CD8-positive, alpha-beta T cell (primary cell): ENCODE measurements at regions of chr1 and their contacts with region 1.

Region 1: DNA sequence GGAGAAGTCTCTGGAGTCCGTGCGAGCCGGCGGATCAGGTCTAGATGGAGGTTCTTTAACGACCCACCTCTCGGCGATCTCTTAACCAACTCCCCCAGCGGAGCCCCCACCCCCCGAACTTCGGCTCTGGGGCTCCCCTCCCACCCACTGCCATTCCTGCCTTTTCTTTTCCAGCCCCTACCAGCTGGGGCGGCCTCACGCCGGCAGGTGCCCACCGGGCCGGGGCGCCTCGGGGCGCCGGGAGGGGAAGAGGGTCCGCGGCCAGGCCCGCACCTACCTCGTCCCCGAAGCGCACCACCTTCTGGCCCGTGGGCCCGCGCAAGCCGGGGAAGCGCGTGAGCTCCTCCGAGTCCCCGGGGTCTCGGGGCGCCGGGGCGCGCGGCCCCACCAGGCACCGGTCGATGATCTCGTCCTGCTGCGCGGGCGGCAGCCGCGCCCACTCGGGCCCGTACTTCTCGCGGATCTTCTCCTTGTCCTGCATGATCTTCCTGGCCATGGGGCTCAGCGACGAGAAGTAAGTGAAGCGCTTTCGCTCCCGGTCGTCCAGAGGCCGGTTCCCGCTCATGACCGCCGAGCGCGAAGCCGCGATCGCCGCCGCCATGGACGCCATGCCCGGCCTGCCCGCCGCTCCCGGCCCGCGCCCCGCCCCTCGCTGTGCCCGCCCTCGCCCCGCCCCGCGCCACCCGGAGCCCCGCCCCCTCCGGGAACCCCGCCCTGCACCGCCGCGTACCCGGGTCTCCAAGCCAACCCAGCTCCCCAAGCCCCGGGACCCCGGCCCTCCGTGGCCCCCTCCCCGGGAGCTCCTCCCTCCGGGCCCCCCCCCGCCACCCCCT is at the start of gene C1orf198:
- DNase-seq: peak; percentile 53 to 88 (median 72)
- ATAC-seq: peak; percentile 93
- H3K4me3 ChIP-seq: peak within 1 kb of the TSS; percentile 65 to 79
- H3K4me3 Mint-ChIP-seq: peak within 1 kb of the TSS; percentile 89
- H3K27ac ChIP-seq: peak within 1 kb of the TSS in 1 of 2 experiments; percentile 57
- H3K27ac Mint-ChIP-seq: peak within 1 kb of the TSS; percentile 49
- H3K4me1 ChIP-seq: peaks cover 14% of the 10 kb centered on the region
- H3K4me1 Mint-ChIP-seq: peaks cover 21% of the 10 kb centered on the region
- H3K27me3 ChIP-seq: no peaks in the 10 kb centered on the region
- H3K27me3 Mint-ChIP-seq: peaks cover 18% of the 10 kb centered on the region
- CTCF ChIP-seq: no peak
- total RNA-seq, gene C1orf198: 3.2 to 3.8 TPM

Region 2: DNA sequence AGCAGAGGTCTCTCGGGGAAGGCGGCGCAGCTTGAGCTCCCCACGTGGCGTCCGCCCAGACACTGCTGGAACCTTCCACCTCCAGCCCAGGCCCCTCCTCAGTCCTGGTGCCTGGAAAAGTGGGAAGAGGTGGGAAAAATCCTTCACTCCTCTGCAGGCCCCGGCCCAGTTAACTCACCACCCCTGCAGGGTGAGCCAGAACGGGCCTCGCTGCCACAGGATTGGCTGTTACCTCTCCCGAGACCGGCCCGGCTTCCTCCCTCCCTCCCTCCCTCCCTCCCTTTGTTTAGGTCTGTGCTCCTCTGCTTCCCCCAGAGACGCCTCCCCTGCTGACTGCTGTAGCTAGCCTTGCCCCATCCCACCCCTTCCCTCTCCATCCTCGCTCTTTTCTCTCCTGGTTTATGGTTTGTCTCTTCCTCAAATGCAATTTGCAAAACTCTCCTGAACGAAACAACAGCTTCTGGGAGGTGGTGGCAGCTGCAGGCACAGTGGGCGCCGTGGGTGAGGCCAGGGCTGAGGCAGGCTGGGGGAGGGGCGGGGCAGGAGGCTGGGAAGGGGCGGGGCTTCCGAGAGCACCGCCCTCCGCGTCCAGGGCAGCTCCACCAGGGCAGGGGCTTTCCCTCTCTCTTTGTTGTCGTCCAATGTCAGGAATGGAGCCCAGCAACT is 114.4 kb before region 1 on chr1:
- CTCF ChIA-PET with region 1: no interaction called
- POLR2A ChIA-PET with region 1: no interaction called
- intact Hi-C with region 1: loop called in 1 of 2 experiments (anchors 2 kb)
- DNase-seq: peak in 3 of 9 experiments; percentile 34 to 61 (median 40)
- ATAC-seq: peak; percentile 75
- H3K4me3 ChIP-seq: peak overlapping the region in 1 of 2 experiments; percentile 39
- H3K4me3 Mint-ChIP-seq: peak overlapping the region; percentile 72
- H3K27ac ChIP-seq: no peak overlapping the region
- H3K27ac Mint-ChIP-seq: peak overlapping the region; percentile 71
- H3K4me1 ChIP-seq: no peaks in the 10 kb centered on the region
- H3K4me1 Mint-ChIP-seq: peaks cover 10% of the 10 kb centered on the region
- H3K27me3 ChIP-seq: no peaks in the 10 kb centered on the region
- H3K27me3 Mint-ChIP-seq: peaks cover 3% of the 10 kb centered on the region
- CTCF ChIP-seq: no peak

Region 3: DNA sequence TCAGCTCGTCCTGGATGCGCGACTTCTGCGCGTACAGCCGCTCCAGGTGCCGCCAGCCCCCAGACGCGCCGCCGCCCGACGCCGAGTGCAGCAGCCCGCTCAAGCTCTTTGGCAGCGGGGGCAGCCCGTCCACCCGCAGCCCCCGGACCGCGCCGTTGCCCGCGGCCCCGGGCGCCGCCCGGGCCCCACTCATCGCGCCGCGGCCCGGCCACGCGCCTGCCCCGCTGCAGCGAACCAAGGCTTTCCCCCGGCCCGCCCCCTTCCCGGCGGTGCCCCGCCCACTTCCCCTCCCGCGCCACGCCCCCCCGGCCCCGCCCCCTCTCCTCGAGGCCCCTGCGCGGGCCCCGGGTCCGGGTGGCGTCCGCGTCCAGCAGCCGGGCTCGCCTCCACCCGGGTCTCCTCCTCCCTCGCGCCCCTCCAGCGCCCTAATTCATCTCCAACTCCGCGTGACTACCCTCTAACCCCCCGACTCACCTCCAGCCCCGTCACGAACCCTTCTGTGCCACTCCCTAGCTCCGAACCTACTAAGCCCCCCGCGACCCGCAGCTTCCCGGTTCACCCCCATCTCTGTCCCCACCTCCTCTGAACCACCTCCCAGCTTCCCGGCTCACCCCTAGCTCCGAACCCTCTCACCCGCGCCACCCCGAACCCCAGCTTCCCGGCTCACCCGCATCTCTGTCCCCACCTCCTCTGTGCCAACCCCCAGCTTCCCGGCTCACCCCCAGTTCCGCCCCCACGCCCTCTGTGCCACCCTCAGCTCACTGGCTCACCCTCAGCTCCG is 172.1 kb after region 1 on chr1 and contains the start of gene FAM89A:
- CTCF ChIA-PET with region 1: no interaction called
- POLR2A ChIA-PET with region 1: no interaction called
- intact Hi-C with region 1: loop called (anchors 1 to 2 kb)
- DNase-seq: peak; percentile 44 to 86 (median 71)
- ATAC-seq: peak; percentile 72
- H3K4me3 ChIP-seq: peak within 1 kb of the TSS; percentile 81 to 83
- H3K4me3 Mint-ChIP-seq: peak within 1 kb of the TSS; percentile 83
- H3K27ac ChIP-seq: no peak within 1 kb of the TSS
- H3K27ac Mint-ChIP-seq: peak within 1 kb of the TSS; percentile 27
- H3K4me1 ChIP-seq: peaks cover 22% of the 10 kb centered on the region
- H3K4me1 Mint-ChIP-seq: peaks cover 33% of the 10 kb centered on the region
- H3K27me3 ChIP-seq: no peaks in the 10 kb centered on the region
- H3K27me3 Mint-ChIP-seq: no peaks in the 10 kb centered on the region
- CTCF ChIP-seq: no peak
- total RNA-seq, gene FAM89A: 1.4 to 2.1 TPM